ENCODE measurements at regions of chr2 and their contacts with region 1.

Region 1: GRCh38 chr2:19554520-19554919 is 196.1 kb upstream of the OSR1 start:
- DNase-seq: no peak
- H3K4me3 ChIP-seq: no peak overlapping the region
- H3K27ac ChIP-seq: no peak overlapping the region
- H3K4me1 ChIP-seq: no peaks in the 10 kb centered on the region
- H3K27me3 ChIP-seq: no peaks in the 10 kb centered on the region
- CTCF ChIP-seq: no peak
- POLR2A ChIP-seq: no peak

Region 2: GRCh38 chr2:18454692-18455235 is 1099.8 kb before region 1 on chr2:
- intact Hi-C with region 1: loop called (anchors 5 kb)
- DNase-seq: no peak
- H3K4me3 ChIP-seq: no peak overlapping the region
- H3K27ac ChIP-seq: peak overlapping the region in 1 of 2 donors; percentile 16
- H3K4me1 ChIP-seq: no peaks in the 10 kb centered on the region
- H3K27me3 ChIP-seq: no peaks in the 10 kb centered on the region
- CTCF ChIP-seq: no peak
- POLR2A ChIP-seq: no peak

Region 3: DNA sequence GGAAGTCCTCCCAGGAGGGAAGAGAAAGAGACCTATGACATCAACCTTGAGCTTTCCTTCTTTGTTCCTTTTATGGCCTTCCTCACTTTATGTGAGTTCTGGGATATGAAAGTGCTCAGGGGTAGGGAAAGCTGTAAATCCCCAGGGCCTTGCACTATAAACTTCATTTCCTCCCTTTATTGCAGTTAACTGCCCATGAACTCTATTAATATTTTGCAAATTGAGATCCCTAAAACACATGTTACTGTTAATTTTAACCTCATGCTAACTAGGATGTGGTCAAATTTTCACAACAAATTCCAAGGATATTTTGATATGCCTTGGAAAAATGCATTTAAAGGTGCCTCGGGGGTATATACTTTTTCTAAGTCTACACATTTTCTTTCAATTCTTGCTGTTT is 556.0 kb before region 1 on chr2:
- intact Hi-C with region 1: no loop called
- DNase-seq: no peak
- H3K4me3 ChIP-seq: no peak overlapping the region
- H3K27ac ChIP-seq: no peak overlapping the region
- H3K4me1 ChIP-seq: no peaks in the 10 kb centered on the region
- H3K27me3 ChIP-seq: no peaks in the 10 kb centered on the region
- CTCF ChIP-seq: no peak
- POLR2A ChIP-seq: no peak

Region 4: DNA sequence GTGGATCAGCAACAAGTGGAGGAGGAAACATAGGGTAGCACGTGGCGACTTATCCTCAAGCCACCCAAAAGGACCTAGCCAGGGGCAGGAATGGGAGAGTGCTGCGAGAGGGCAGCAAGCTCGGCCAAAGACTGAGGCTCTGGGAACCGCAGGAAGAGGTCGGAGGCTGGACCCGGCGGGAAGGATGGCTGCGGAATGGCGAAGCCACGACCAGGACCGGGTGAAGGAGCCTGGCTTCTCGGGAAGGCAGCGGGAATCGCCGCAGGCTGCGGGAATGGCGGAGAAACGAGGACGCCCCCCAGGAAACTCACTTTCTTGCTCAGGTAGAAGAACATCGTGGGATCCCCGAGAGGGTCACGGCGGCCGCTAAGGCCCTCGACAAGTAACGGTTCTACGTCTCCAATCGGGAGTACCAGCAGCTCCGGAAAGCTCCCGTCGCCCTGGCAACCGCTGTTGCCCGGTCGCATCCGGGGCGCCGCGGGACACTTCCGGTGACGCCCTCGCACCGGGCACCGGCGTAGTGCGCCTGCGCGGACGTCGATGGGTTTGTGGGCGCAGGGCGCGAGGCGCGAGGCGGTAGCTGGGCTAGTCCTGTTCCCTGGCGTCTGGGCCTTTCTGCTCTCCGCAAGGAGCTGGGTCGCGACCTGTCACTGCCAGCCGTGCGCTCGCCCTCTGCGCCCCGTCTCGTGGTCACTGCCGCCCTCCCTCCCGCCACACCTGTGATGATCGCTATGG is 435.3 kb after region 1 on chr2 and contains the start of gene WDR35:
- intact Hi-C with region 1: no loop called
- DNase-seq: peak; percentile 79 to 86
- H3K4me3 ChIP-seq: peak within 1 kb of the TSS; percentile 66 to 93 (median 87)
- H3K27ac ChIP-seq: peak within 1 kb of the TSS; percentile 81 to 82
- H3K4me1 ChIP-seq: no peaks in the 10 kb centered on the region
- H3K27me3 ChIP-seq: no peaks in the 10 kb centered on the region
- CTCF ChIP-seq: no peak
- POLR2A ChIP-seq: peak; percentile 73
- total RNA-seq, gene WDR35: 12.5 to 18.7 (median 17.7) TPM

Measured in breast epithelium (tissue), 4 donors.